BJ (cell line): ENCODE measurements at regions of chr7 and their contacts with region 1.

Region 1: GRCh38 chr7:29189743-29190201 is 4.8 kb upstream of the CHN2 start:
- DNase-seq: no peak
- H3K4me3 ChIP-seq: no peak overlapping the region
- H3K27me3 ChIP-seq: peaks cover 9% of the 10 kb centered on the region
- CTCF ChIP-seq: peak; percentile 87

Region 2: DNA sequence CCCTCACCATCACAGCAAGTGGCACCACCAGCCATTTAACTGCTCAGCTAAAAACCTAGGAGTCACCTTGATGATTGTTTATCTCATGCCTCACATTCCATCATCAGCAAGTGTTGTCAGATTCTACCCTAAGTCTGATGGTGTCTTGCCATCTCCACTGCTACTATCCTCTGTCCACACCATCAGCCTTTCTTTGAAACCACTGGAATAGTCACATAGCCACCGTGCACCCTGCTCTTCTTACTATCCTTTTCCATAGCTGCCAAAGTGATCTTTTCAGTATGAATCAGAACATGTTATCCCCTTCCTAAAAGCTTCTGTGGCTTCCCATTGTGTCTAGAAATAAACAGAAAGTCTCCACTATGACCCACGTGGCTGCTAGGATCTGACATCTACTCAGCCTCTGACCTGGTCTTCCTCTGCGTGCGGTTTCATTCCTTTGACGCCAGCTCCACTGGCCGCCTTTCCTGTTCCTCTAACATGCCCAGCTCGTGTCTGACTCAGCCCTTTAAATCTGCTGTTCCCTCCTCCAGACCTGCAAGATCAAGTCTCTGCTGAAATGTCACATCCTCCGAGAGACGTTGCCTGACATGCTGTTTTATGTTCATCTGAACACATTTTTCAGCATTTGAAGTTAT is 11.7 kb before region 1 on chr7:
- CTCF ChIA-PET with region 1: interaction called, 12 read pairs
- POLR2A ChIA-PET with region 1: no interaction called
- DNase-seq: no peak
- H3K4me3 ChIP-seq: no peak overlapping the region
- H3K27me3 ChIP-seq: no peaks in the 10 kb centered on the region
- CTCF ChIP-seq: no peak

Region 3: GRCh38 chr7:29204491-29205272 is 14.9 kb after region 1 on chr7:
- CTCF ChIA-PET with region 1: interaction called, 17 read pairs
- POLR2A ChIA-PET with region 1: no interaction called
- DNase-seq: no peak
- H3K4me3 ChIP-seq: no peak overlapping the region
- H3K27me3 ChIP-seq: no peaks in the 10 kb centered on the region
- CTCF ChIP-seq: no peak

Region 4: DNA sequence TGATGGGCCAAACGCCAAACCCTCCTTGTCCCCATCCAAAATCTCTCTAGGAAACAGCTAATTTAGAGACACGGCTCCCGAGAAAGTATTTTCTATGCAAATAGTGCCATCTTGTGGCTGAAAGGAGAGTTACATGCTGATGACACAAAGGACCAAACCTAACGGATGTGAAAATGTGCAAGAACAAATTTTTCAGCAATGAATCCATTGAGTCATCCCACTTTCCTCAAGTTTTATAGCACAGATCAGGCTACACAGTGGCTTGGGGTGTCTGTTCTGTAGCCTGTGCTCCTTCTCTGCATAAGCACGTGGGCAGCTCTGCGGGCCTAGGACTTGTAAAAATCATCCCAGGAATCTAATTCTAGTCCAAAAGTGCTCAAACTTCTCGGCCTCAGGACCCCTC is 219.1 kb after region 1 on chr7:
- CTCF ChIA-PET with region 1: interaction called, 34 read pairs
- POLR2A ChIA-PET with region 1: no interaction called
- DNase-seq: peak; percentile 70
- H3K4me3 ChIP-seq: no peak overlapping the region
- H3K27me3 ChIP-seq: no peaks in the 10 kb centered on the region; the same call in 1 of the 2 replicates
- CTCF ChIP-seq: peak; percentile 75

Region 5: DNA sequence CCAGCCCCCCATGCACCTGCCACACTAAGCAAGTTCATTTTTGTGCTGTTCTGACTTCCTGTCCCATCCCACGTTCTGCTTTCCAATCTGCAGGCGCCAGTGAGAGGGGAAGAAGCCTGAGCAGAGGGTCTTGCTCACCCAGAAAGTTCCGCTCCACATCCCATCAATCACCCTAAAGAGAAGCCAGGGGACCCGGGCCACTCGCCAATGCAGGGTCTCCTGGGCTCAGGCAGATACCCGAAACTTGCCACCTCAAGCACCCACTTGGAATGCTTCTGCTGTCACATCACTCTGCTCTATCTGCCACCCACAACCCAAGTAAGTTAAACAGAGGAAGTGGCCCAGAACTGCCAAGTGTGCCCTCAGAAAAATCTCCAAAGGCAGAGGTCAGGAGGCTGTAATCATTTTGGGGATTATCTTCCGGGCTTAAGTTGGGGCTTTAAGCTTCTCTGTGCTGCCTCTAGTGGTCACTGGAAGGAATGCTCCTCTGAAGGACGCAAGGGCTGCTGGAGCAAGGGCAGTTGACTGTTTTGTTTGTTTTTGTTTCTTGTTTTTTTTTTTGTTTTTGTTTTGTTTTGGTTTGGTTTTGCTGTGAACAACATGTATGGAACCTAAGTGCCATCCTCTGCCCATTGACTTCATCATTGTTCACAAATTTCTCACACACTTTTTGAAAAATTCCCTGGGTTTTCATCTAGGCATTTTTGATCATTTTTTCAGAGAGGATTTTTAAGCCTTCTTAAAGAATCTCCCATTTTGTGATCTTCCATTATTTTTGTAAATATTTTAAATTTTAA is 399.3 kb after region 1 on chr7:
- CTCF ChIA-PET with region 1: no interaction called
- POLR2A ChIA-PET with region 1: no interaction called
- DNase-seq: no peak
- H3K4me3 ChIP-seq: no peak overlapping the region
- H3K27me3 ChIP-seq: no peaks in the 10 kb centered on the region
- CTCF ChIP-seq: peak; percentile 89